ENCODE measurements at regions of chr9 and their contacts with region 1.

Region 1: GRCh38 chr9:104279535-104280190 is 185.6 kb downstream of the SMC2 start:
- DNase-seq: no peak
- H3K4me3 ChIP-seq: no peak overlapping the region
- H3K27ac ChIP-seq: no peak overlapping the region
- H3K4me1 ChIP-seq: no peaks in the 10 kb centered on the region
- H3K27me3 ChIP-seq: no peaks in the 10 kb centered on the region
- CTCF ChIP-seq: no peak
- POLR2A ChIP-seq: no peak

Region 2: DNA sequence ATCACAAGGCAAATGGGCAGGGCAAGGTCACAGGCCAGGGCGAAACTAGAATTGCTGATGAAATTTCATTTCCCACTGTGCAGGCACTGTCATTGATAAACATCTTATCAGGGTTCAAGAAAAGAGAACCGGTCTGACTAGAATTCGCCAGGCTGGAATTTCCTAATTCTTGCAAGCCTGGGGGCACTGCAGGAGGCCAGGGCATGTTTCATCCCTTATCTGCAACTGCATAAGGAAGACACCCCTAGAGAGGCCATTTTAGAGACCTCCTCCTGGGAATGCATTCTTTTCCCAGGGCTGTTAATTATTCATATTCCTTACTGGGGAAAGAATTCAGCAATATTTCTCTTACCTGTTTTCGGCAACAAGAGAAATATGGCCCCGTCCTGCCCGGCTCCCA is 1550.7 kb before region 1 on chr9:
- intact Hi-C with region 1: loop called (anchors 10 kb)
- DNase-seq: no peak
- H3K4me3 ChIP-seq: no peak overlapping the region
- H3K27ac ChIP-seq: no peak overlapping the region
- H3K4me1 ChIP-seq: no peaks in the 10 kb centered on the region
- H3K27me3 ChIP-seq: no peaks in the 10 kb centered on the region
- CTCF ChIP-seq: no peak
- POLR2A ChIP-seq: no peak